Activated CD8-positive, alpha-beta memory T cell treated with anti-CD3 and anti-CD28 coated beads, Interleukin-2, amount 10 ng/mL, durations not matched to agents 7 days and 5 days (primary cell): ENCODE measurements at regions of chr1 and their contacts with region 1.

Region 1: GRCh38 chr1:156445789-156446263 is 54.7 kb downstream of the MEF2D start:
- DNase-seq: peak; percentile 86
- ATAC-seq: peak; percentile 84
- H3K4me3 Mint-ChIP-seq: no peak overlapping the region
- H3K27ac Mint-ChIP-seq: no peak overlapping the region
- H3K4me1 Mint-ChIP-seq: peaks cover 15% of the 10 kb centered on the region
- H3K27me3 Mint-ChIP-seq: peaks cover 58% of the 10 kb centered on the region

Region 2: DNA sequence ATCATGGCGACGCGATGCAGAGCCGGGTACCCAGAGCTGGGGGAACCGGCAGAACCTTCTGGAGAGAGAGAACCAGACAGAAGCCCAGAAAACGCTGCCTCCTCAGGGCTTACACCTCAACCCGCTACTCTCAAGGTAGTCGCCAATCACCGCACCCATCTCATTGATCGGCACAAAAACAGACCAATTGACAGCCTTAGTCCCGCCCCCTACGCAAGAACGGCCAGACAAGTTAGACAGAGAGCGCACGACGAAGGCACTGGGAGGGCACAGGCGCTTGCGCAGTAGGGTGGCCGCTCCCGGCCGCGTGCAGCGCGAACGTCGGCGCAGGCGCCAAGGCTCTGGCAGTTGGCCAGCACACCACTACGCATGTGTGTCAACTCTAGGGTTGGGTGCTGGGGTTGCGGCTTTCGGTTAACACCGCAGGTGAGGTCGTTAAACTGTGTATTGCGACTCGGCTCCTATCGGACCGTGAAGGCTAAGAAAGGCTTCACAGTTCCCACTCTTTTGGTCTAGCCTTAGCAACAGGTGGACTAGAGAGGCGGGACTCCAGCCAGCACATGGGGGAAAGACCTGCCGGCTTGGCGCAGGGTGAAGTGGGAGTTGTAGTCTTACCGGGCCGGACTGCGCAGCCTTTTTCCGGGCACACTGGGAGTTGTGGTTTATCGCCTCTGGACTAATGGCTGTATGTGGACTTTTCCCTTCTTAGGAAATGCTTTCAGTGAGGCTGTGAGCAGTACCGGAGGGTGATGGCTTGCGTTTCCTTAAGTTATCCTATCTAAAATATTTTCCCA is 107.4 kb before region 1 on chr1 and contains the starts of genes CCT3 and TSACC:
- CTCF ChIA-PET with region 1: interaction called, 16 read pairs
- DNase-seq: peak; percentile 99
- ATAC-seq: peak; percentile 95
- H3K4me3 Mint-ChIP-seq: peak within 1 kb of the TSS; percentile 95
- H3K27ac Mint-ChIP-seq: peak within 1 kb of the TSS; percentile 89
- H3K4me1 Mint-ChIP-seq: peaks cover 30% of the 10 kb centered on the region
- H3K27me3 Mint-ChIP-seq: peaks cover 10% of the 10 kb centered on the region
- total RNA-seq, gene CCT3: 253 to 361 TPM
- total RNA-seq, gene TSACC: not detected

Region 3: GRCh38 chr1:156371553-156372264 is 74.1 kb before region 1 on chr1:
- CTCF ChIA-PET with region 1: interaction called, 14 read pairs
- DNase-seq: no peak
- ATAC-seq: no peak
- H3K4me3 Mint-ChIP-seq: no peak overlapping the region
- H3K27ac Mint-ChIP-seq: no peak overlapping the region
- H3K4me1 Mint-ChIP-seq: peaks cover 3% of the 10 kb centered on the region
- H3K27me3 Mint-ChIP-seq: peaks cover 56% of the 10 kb centered on the region

Region 4: GRCh38 chr1:156421062-156421938 is 24.5 kb before region 1 on chr1:
- CTCF ChIA-PET with region 1: interaction called, 25 read pairs
- DNase-seq: peak; percentile 84
- ATAC-seq: peak; percentile 82
- H3K4me3 Mint-ChIP-seq: peak overlapping the region; percentile 79
- H3K27ac Mint-ChIP-seq: no peak overlapping the region
- H3K4me1 Mint-ChIP-seq: peaks cover 18% of the 10 kb centered on the region
- H3K27me3 Mint-ChIP-seq: peaks cover 91% of the 10 kb centered on the region

Region 5: DNA sequence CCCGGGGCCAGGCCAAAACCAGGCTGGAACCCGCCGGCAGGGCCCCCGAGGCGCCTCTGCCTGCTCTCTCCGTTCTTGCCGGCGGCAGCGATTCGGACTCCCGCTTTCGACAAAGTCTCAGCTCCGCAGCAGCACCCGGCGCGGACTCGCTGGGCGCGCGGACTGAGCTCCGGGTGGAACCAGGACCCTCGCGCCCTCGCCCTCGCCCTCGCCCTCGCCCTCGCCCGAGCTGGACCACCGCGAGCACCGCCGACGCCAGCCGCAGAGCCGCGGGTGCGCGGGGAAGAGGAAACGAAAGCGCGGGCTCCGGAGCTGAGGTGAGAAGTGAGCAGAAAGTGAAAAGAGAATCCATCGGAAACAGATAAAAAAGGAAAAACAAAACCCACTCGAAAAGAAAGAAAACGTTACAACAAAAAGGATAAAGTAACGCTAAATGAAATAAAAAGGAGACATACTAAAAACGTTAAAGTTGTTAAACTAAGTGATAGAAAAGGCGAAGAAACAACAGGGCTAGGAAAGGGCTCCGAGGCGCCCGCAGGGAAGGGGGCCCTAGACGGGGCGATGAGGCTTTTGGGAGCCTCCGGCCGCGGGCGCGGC is 10.2 kb before region 1 on chr1:
- CTCF ChIA-PET with region 1: interaction called, 20 read pairs
- DNase-seq: no peak
- ATAC-seq: peak; percentile 27
- H3K4me3 Mint-ChIP-seq: peak overlapping the region; percentile 69
- H3K27ac Mint-ChIP-seq: peak overlapping the region; percentile 50
- H3K4me1 Mint-ChIP-seq: peaks cover 22% of the 10 kb centered on the region
- H3K27me3 Mint-ChIP-seq: peaks cover 92% of the 10 kb centered on the region

Region 6: DNA sequence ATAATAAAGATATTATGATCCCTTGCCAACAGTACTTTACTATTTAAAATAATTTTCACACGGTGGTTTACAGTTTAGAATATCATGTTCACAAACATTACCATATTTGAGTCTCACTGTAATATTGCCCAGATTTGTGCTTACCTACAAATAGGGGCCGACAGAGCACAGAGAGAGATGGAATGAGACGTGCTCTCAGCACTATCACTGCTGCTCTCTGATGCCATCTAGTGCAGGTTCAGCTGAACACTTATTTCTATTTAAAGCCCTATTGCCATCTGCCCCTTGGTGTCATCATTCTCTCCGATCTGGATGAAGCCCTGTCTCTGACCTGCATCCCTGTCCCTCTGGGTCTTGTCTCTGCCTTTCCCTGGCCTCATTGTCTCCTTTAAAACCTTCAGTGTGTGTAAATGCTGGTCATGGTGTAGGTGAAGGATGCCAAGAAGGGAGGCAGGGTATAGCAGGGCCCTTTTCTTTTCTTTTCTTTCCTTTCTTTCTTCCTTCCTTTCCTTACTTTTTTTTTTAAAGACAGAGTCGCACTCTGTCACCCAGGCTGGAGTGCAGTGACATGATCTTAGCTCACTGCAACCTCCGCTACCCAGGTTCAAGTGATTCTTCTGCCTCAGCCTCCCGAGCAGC is 162.3 kb after region 1 on chr1:
- CTCF ChIA-PET with region 1: interaction called, 24 read pairs
- DNase-seq: peak; percentile 81
- ATAC-seq: peak; percentile 94
- H3K4me3 Mint-ChIP-seq: no peak overlapping the region
- H3K27ac Mint-ChIP-seq: no peak overlapping the region
- H3K4me1 Mint-ChIP-seq: peaks cover 11% of the 10 kb centered on the region
- H3K27me3 Mint-ChIP-seq: peaks cover 19% of the 10 kb centered on the region